ENCODE measurements at regions of chr16 and their contacts with region 1.

Region 1: GRCh38 chr16:25093208-25094061 is 18.1 kb upstream of the LCMT1 start:
- DNase-seq: peak; percentile 64
- H3K4me3 Mint-ChIP-seq: peak overlapping the region; percentile 62
- H3K27ac Mint-ChIP-seq: peak overlapping the region; percentile 84
- H3K4me1 Mint-ChIP-seq: peaks cover 31% of the 10 kb centered on the region
- H3K27me3 Mint-ChIP-seq: peaks cover 4% of the 10 kb centered on the region

Region 2: DNA sequence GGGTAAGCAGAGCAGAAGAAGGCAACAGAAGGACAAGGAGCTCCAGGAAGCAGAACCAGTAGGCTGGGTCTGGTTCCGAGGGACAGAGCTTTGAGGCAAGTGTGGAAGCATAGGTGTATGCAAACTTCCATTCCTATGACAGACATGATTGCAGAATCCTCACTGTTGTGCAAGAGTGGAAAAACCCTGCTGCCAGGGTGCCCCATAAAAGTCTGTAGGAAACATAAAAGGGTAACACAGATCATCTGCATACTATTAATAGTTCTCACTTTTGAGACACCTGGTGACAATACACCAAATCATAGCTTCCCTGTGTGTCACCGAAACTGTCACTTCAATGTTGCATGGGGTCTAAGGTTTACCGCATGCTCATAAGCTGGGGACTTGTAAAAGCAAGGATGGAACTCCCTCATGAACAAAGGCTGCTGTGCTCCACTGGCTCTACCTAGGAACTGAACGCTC is 118.0 kb before region 1 on chr16:
- intact Hi-C with region 1: no loop called
- DNase-seq: no peak
- H3K4me3 Mint-ChIP-seq: no peak overlapping the region
- H3K27ac Mint-ChIP-seq: peak overlapping the region; percentile 58
- H3K4me1 Mint-ChIP-seq: peaks cover 33% of the 10 kb centered on the region
- H3K27me3 Mint-ChIP-seq: no peaks in the 10 kb centered on the region

Region 3: DNA sequence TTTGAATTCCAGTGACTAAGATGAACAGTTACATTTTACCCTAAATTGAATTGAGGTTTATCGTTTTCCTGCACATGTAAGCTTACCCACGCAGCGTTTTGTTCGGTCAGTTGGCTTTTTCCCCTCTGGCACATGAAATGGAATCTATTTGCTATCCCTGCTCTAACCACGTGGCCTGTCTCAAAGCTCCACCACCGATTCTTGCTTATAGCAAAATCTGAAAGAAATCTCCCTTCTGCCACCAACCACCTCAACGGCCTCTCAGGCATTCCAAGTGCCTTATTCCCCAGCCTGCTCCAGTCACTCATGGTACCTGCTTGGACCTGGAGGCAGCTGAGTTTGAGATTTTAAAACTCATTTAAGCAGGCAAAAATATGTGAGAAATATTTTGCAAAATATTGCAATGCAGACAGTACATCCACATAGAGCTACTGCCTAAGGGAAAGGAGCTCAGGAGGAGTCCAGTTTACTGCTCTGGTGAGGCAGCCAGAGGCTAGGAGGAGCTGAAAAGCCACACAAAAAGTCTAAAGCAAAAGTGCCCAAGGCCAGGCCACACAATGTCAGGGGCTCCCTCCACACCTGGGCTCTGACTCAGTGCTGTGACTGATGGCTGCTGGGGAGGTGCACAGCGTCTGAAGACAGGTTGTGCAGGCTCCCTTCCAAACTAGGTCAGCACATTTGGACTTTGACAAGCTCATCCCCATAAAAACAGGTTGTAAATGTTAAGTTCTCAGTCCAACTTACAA is 104.7 kb before region 1 on chr16:
- intact Hi-C with region 1: no loop called
- DNase-seq: no peak
- H3K4me3 Mint-ChIP-seq: no peak overlapping the region
- H3K27ac Mint-ChIP-seq: no peak overlapping the region
- H3K4me1 Mint-ChIP-seq: peaks cover 32% of the 10 kb centered on the region
- H3K27me3 Mint-ChIP-seq: no peaks in the 10 kb centered on the region

Region 4: GRCh38 chr16:25066747-25067631 is 26.4 kb before region 1 on chr16:
- intact Hi-C with region 1: loop called (anchors 2 kb)
- DNase-seq: peak; percentile 95
- H3K4me3 Mint-ChIP-seq: peak overlapping the region; percentile 92
- H3K27ac Mint-ChIP-seq: peak overlapping the region; percentile 87
- H3K4me1 Mint-ChIP-seq: peaks cover 35% of the 10 kb centered on the region
- H3K27me3 Mint-ChIP-seq: no peaks in the 10 kb centered on the region